SK-N-SH (cell line): ENCODE measurements at regions of chr7 and their contacts with region 1.

Region 1: DNA sequence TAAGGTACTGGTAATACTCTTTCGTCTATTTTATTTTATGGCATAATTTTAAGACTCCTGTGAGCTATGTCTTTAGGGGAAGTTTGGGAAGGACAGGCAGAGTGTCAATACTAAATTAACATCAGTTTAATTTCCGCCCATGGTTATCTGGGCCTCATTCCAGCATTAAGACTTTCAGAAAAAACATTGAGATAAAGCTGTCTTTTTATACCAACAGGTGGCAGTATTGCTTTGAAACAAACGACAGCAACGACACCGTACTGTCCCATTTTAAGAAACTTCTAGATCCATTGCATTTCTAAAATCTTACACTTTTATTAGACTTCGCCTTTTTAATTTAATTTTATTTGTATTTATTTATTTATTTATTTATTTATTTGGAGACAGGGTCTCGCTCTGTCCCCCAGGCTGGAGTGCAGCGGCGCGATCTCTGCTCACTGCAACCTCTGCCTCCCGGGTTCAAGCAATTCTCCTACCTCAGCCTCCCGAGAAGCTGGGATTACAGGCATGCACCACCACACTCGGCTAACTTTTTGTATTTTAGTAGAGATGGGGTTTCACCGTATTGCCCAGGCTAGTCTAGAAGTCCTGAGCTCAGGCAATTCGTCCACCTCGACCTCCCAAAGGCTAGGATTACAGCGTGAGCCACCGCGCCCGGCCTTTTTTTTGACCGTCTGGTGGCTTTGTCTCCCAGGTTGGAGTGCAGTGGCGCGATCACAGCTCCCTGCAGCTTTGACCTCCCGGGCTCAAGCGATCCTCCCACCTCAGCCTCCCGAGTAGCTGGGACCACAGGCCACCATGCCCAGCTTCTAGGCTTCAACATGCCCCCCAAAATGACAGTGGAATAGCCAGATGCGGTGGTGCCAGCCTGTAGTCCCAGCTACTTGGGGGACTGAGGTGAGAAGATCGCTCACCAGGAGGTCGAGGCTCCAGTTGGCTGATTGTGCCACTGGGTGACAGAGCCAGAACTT is 78.7 kb upstream of the C1GALT1 start:
- DNase-seq: peak; percentile 67
- H3K4me3 ChIP-seq: no peak overlapping the region
- H3K27ac ChIP-seq: no peak overlapping the region
- H3K4me1 ChIP-seq: peaks cover 12 to 13% of the 10 kb centered on the region in 2 experiments; a peak in 3 of 4 replicates
- H3K27me3 ChIP-seq: no peaks in the 10 kb centered on the region
- CTCF ChIP-seq: peak; percentile 89
- EP300 ChIP-seq: no peak
- RAD21 ChIP-seq: peak; percentile 92

Region 2: DNA sequence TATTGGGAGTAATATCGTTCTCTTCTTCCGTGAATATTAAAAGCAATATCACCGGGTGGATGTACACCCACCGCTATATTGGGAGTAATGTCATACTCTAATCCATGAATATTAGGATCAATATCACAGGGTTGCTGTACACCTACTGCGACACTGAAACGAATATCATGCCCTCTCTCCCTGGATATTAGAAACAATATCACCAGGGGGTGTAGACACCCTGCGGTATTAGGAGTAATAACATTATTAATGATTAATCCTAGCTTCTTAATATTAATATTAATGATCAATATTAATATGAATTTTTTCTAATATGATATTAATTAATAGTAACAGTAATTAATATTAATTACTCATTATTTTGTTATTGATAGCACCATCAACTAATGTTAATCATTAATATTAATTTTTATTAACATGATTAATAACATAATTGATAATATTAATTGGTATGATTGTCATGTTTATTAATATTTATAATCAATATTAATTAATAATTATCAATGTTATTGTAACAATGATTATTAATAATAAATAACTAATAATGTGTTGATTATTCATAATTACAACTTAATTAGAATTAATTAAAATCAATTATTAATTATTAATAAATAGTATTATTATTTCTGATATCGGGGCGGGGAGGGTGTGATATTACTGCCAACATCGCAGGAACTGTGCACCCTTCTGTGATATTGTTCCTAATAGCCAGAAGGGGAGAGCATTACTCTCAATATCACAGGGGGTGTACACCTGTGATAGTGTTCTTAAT is 42.6 kb before region 1 on chr7:
- CTCF ChIA-PET with region 1: no interaction called
- POLR2A ChIA-PET with region 1: no interaction called
- DNase-seq: no peak
- H3K4me3 ChIP-seq: no peak overlapping the region
- H3K27ac ChIP-seq: no peak overlapping the region
- H3K4me1 ChIP-seq: no peaks in the 10 kb centered on the region
- H3K27me3 ChIP-seq: no peaks in the 10 kb centered on the region
- CTCF ChIP-seq: no peak
- EP300 ChIP-seq: no peak
- RAD21 ChIP-seq: no peak

Region 3: DNA sequence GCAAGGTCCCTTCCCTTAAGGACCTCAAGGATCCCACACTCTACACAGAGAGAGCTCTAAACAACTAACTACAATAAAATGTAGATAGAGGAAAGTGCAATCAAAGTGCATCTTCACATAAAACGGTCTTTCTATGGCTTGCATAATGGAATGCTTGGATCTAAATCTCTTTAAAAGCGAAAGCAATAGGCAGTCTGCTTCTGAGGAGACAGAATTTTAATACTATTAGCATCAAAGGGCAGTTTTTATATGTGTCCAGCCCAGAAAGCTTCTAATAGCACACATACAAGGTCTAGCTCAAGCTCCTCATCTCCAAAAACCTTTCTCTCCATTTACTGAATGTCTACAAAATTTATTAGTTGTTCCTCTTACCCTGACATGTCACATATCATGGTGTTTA is 22.8 kb before region 1 on chr7:
- CTCF ChIA-PET with region 1: interaction called, 23 read pairs
- POLR2A ChIA-PET with region 1: no interaction called
- DNase-seq: no peak
- H3K4me3 ChIP-seq: no peak overlapping the region
- H3K27ac ChIP-seq: no peak overlapping the region
- H3K4me1 ChIP-seq: no peaks in the 10 kb centered on the region
- H3K27me3 ChIP-seq: no peaks in the 10 kb centered on the region
- CTCF ChIP-seq: no peak
- EP300 ChIP-seq: no peak
- RAD21 ChIP-seq: no peak

Region 4: GRCh38 chr7:7114706-7115295 is 11.2 kb after region 1 on chr7:
- CTCF ChIA-PET with region 1: interaction called, 53 read pairs
- POLR2A ChIA-PET with region 1: no interaction called
- DNase-seq: no peak
- H3K4me3 ChIP-seq: no peak overlapping the region
- H3K27ac ChIP-seq: no peak overlapping the region
- H3K4me1 ChIP-seq: no peaks in the 10 kb centered on the region
- H3K27me3 ChIP-seq: no peaks in the 10 kb centered on the region
- CTCF ChIP-seq: no peak
- EP300 ChIP-seq: no peak
- RAD21 ChIP-seq: no peak

Region 5: DNA sequence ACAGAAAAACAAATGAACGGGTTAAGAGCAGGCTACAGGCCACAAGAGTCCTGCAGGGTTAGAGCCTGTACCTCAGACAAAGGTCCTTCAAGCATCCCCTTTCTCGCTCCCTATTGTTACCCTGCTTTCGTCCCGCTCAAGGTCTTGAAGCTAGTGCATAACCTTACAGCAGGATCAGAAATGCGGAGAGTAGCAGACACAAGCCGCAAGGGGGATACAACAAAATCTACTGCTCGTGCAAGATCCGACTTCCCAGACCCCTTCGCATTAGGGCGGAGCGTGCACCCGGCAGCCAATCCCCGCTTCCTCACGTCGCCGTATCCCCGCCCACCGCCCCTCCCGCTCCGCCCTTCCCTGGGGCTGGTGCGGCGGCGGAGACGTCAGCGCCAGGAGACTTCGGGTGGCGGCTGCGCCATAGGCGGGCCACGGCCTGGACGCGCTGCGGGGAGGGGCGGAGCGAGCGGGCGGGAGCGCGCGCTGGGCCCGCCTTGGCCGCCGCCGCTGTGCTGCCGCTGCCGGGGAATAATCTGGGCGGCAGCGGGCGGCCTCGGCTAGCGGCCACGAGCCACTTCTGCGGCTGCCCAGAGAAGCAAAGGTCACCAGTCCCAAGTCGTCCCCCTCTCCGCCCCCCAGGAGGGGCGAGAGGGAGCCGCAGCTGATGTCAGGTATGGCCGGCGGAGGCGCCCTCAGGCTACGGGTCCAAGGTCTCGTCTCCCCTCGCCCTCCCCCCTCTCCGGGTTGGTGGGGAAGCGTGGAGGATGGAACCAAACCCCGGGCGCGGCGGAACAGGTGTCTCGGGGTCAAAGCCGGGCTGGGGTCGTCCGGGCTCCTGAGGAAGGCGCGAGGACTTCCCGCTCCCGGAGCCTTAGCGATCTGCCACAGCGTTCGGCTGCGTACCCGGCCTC is 78.8 kb after region 1 on chr7 and contains the start of gene C1GALT1:
- CTCF ChIA-PET with region 1: interaction called, 13 read pairs
- POLR2A ChIA-PET with region 1: no interaction called
- DNase-seq: peak; percentile 98
- H3K4me3 ChIP-seq: peak within 1 kb of the TSS; percentile 78 to 100
- H3K27ac ChIP-seq: peak within 1 kb of the TSS; percentile 85 to 99
- H3K4me1 ChIP-seq: peaks cover 13 to 19% of the 10 kb centered on the region in 2 experiments; a peak in 3 of 4 replicates
- H3K27me3 ChIP-seq: no peaks in the 10 kb centered on the region
- CTCF ChIP-seq: peak; percentile 54
- EP300 ChIP-seq: 0 out of 4 replicates have a peak, but pooled peaks of 1 of the 2 experiments have one; percentile 11
- RAD21 ChIP-seq: peak; percentile 52
- polyA plus RNA-seq, gene C1GALT1: 15.2 and 16.4 TPM in 2 replicates

Region 6: GRCh38 chr7:7535691-7536090 is 432.1 kb after region 1 on chr7 and contains the start of gene COL28A1:
- CTCF ChIA-PET with region 1: interaction called, 32 read pairs
- POLR2A ChIA-PET with region 1: no interaction called
- DNase-seq: no peak
- H3K4me3 ChIP-seq: no peak within 1 kb of the TSS
- H3K27ac ChIP-seq: no peak within 1 kb of the TSS
- H3K4me1 ChIP-seq: no peaks in the 10 kb centered on the region; a peak in 1 of 4 replicates
- H3K27me3 ChIP-seq: no peaks in the 10 kb centered on the region
- CTCF ChIP-seq: no peak
- EP300 ChIP-seq: no peak
- RAD21 ChIP-seq: no peak
- polyA plus RNA-seq, gene COL28A1: 0.08 TPM in 1 of 2 replicates, not detected in the other